ENCODE measurements at regions of chr3 and their contacts with region 1.

Region 1: GRCh38 chr3:67901681-67902080 is 247.3 kb upstream of the SUCLG2 start:
- DNase-seq: peak; percentile 3
- ATAC-seq: peak; percentile 46; the same call in 2 of the 3 replicates
- H3K4me3 ChIP-seq: no peak overlapping the region
- H3K27ac ChIP-seq: no peak overlapping the region
- H3K4me1 ChIP-seq: peaks cover 6% of the 10 kb centered on the region; the same call in 1 of the 2 replicates
- H3K27me3 ChIP-seq: no peaks in the 10 kb centered on the region
- CTCF ChIP-seq: peak; percentile 35; the same call in 1 of the 2 replicates
- EP300 ChIP-seq: no peak
- POLR2A ChIP-seq: no peak
- RAD21 ChIP-seq: no peak

Region 2: DNA sequence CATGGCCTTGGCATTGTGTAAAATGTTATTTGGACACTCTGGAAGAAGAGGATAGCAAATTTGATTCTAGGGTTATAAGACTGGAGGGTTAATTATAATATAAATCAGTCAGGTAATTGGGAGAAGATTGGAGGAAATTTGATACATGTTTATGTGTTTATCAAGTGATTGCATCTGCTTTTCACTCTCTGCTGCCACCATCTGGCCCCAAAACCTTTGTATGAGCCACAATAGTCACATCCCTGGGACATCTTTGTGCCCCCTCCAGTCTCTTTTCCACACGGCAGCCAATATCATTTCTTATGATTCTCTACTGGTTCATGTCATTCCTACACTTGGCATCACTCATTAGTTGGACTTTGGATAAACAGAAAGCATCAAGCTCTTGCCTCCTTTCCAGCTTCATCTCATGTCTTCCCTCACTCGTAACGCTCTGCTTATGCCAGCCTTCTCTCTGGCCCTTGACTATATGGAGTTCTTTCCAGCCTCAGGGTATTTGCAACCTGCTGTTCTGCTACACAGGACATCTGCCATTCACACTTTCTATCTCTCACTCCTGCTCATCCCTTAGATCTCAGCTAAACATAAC is 355.0 kb after region 1 on chr3:
- CTCF ChIA-PET with region 1: no interaction called
- POLR2A ChIA-PET with region 1: no interaction called
- in situ Hi-C with region 1: no loop called
- intact Hi-C with region 1: loop called (anchors 2 kb)
- DNase-seq: no peak
- ATAC-seq: no peak
- H3K4me3 ChIP-seq: no peak overlapping the region
- H3K27ac ChIP-seq: no peak overlapping the region
- H3K4me1 ChIP-seq: no peaks in the 10 kb centered on the region
- H3K27me3 ChIP-seq: no peaks in the 10 kb centered on the region
- CTCF ChIP-seq: peak; percentile 22; the same call in 1 of the 2 replicates
- EP300 ChIP-seq: no peak
- POLR2A ChIP-seq: no peak
- RAD21 ChIP-seq: no peak

Region 3: GRCh38 chr3:69200384-69201068 is 1298.8 kb after region 1 on chr3:
- CTCF ChIA-PET with region 1: no interaction called
- POLR2A ChIA-PET with region 1: no interaction called
- in situ Hi-C with region 1: no loop called
- intact Hi-C with region 1: no loop called
- DNase-seq: peak; percentile 88
- ATAC-seq: peak; percentile 95
- H3K4me3 ChIP-seq: peak overlapping the region; percentile 58 to 96 (median 71)
- H3K27ac ChIP-seq: peak overlapping the region; percentile 98
- H3K4me1 ChIP-seq: peaks cover 18% of the 10 kb centered on the region
- H3K27me3 ChIP-seq: no peaks in the 10 kb centered on the region
- CTCF ChIP-seq: no peak
- EP300 ChIP-seq: peak in 1 of 2 experiments; percentile 31; a peak in 1 of 4 replicates
- POLR2A ChIP-seq: peak in 1 of 2 experiments; percentile 80; a peak in 2 of 4 replicates
- RAD21 ChIP-seq: no peak

Region 4: GRCh38 chr3:69219101-69219708 is 1317.5 kb after region 1 on chr3:
- CTCF ChIA-PET with region 1: no interaction called
- POLR2A ChIA-PET with region 1: no interaction called
- in situ Hi-C with region 1: no loop called
- intact Hi-C with region 1: no loop called
- DNase-seq: no peak
- ATAC-seq: no peak
- H3K4me3 ChIP-seq: no peak overlapping the region
- H3K27ac ChIP-seq: no peak overlapping the region
- H3K4me1 ChIP-seq: no peaks in the 10 kb centered on the region
- H3K27me3 ChIP-seq: no peaks in the 10 kb centered on the region
- CTCF ChIP-seq: no peak
- EP300 ChIP-seq: no peak
- POLR2A ChIP-seq: no peak
- RAD21 ChIP-seq: no peak

Measured in HepG2 (cell line).